Ascending aorta (tissue), 2 donors: ENCODE measurements at regions of chr2 and their contacts with region 1.

Region 1: DNA sequence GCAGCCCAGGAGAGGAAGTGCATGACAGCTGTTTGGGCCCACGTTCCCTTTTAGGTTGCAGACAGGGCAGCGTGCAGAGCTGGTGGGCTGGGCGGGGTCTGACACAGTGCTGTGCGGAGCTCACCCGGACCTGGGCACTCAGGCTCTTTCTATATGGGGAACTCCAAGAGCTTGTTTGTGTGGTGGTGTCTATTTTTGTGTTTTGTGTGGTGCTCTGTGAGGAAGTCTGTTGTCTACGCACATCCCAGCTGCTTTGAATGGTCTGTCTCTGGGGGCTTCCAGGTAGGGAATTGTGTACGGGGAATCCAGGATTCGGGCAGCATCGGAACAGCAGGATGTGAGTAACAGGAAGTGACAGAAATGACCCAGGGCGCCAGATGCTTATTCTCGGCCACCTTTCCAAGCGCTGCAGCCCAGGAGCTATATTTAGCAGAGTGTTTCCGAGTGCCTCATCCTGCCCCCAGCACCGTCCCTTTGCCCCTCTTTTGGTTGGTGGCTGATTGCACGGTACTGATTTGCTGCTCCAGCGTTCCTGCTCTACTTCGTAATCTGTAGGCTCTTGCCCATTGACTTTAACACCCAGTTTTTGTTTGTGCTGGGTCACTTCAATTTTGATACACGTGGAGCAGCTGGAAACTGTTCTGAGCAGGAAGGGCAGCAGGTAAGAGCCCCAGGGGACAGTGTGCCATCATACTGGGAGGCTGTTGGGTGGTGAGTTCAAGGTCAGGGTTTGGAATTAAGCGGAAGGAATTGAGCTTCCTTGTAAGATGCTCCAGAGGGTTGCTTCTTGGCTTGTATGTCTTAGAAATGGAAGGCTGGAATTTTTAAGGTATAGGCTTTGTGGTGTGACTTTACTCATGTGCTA is 64.7 kb downstream of the DGKD start:
- DNase-seq: peak; percentile 45 to 95
- H3K4me3 ChIP-seq: peak overlapping the region; percentile 50 to 63
- H3K27ac ChIP-seq: peak overlapping the region; percentile 76 to 95
- H3K4me1 ChIP-seq: peaks cover 17 to 25% of the 10 kb centered on the region in 2 donors
- H3K27me3 ChIP-seq: no peaks in the 10 kb centered on the region
- CTCF ChIP-seq: no peak

Region 2: DNA sequence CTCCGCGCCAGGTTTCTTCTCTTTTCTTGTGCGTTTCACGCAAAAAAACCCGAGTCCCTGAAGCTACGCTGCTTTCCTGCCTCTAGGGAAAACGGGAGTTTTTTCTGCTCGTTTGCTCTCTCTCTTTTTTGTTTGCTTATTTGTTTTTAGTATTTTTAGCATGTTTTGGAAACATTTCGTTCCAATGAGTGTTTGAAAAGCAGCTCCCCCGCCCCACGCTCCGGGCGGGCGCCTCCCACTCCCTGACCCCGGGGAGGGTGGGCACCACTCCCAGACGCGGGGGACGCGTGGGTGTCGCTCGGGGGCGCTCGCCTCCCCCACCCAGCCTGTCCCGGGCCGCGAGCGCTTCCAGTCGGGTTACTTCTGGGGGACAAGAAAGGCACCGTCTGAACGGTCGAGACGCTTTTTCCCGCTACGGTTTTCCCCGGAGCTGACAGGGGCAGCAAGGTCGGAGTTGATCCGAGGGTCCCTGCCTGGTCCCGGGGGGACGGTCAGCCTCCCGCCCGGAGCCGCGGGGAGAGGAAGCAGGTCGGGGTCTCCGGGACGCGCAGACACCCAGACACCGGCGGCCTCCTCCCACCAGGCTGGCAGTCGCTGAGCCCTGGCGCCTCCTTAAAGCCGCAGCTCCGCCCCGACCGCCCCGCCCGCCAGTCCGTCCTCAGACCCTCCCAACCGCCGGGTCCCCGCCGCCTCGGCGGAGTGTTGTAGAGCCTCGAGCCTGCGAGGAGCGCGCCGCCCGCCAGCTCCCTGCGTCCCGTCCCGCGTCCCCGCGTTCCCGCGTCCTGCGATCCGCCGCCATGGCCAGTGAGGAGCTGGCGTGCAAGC is 785.9 kb before region 1 on chr2 and contains the start of gene EFHD1:
- intact Hi-C with region 1: loop called (anchors 10 kb)
- DNase-seq: peak; percentile 39 to 93
- H3K4me3 ChIP-seq: peak within 1 kb of the TSS; percentile 78 to 92
- H3K27ac ChIP-seq: peak within 1 kb of the TSS; percentile 90 to 99
- H3K4me1 ChIP-seq: peaks cover 0 to 29% of the 10 kb centered on the region in 2 donors
- H3K27me3 ChIP-seq: no peaks in the 10 kb centered on the region
- CTCF ChIP-seq: no peak
- total RNA-seq, gene EFHD1: 142 TPM

Region 3: GRCh38 chr2:233353769-233354499 is 65.1 kb before region 1 on chr2 and contains the start of gene DGKD:
- intact Hi-C with region 1: loop called (anchors 2 kb)
- DNase-seq: peak in 1 of 2 donors; percentile 68
- H3K4me3 ChIP-seq: peak within 1 kb of the TSS; percentile 77 to 78
- H3K27ac ChIP-seq: peak within 1 kb of the TSS in 1 of 2 donors; percentile 46
- H3K4me1 ChIP-seq: peaks cover 0 to 10% of the 10 kb centered on the region in 2 donors
- H3K27me3 ChIP-seq: no peaks in the 10 kb centered on the region
- CTCF ChIP-seq: peak in 2 of 3 experiments; percentile 33 to 51
- total RNA-seq, gene DGKD: 28.3 TPM

Region 4: GRCh38 chr2:233375490-233376314 is 43.3 kb before region 1 on chr2:
- intact Hi-C with region 1: no loop called
- DNase-seq: peak in 1 of 2 donors; percentile 30
- H3K4me3 ChIP-seq: no peak overlapping the region
- H3K27ac ChIP-seq: no peak overlapping the region
- H3K4me1 ChIP-seq: peaks cover 0 to 4% of the 10 kb centered on the region in 2 donors
- H3K27me3 ChIP-seq: no peaks in the 10 kb centered on the region
- CTCF ChIP-seq: no peak

Region 5: DNA sequence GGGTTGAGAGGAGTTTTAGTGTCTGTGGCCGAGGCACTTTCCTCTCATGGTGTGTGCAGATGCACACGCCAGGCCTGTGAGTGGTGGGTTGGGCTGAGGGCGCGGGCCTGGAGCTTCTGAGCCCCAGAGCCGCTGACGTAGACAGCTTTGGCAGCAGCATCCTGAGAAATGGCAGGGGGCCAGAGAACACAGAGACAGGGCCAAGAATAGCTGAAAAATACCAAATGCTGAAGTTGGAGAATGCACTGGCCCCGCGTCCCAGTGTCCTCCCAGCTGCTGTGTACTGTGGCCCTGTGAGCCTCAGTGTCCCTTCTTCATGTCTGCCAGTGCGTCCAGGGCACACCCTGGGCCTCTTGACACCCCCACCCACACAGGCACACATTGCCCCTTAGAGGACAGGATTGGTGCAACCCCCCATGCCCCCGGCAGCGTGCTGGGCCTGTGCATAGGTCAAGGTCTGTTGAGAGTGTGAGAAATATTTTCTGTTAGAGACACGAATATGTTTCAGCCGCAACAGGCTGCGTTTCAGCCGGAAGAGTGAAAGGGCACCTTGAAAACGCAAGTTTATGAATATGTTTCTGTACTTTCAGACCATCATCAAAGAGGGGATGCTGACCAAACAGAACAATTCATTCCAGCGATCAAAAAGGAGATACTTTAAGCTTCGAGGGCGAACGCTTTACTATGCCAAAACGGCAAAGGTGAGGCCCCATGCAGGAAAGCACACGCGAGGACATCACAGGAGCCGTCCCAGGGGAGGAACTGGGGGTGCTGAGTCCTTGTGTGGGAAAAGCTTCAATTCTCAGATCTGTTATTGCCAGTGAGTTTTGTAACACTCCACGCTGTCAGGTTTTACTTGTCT is 31.1 kb before region 1 on chr2:
- intact Hi-C with region 1: loop called (anchors 5 kb)
- DNase-seq: peak; percentile 53 to 96
- H3K4me3 ChIP-seq: peak overlapping the region; percentile 18 to 54
- H3K27ac ChIP-seq: peak overlapping the region; percentile 78 to 84
- H3K4me1 ChIP-seq: peaks cover 11 to 25% of the 10 kb centered on the region in 2 donors
- H3K27me3 ChIP-seq: no peaks in the 10 kb centered on the region
- CTCF ChIP-seq: no peak

Region 6: GRCh38 chr2:233480490-233481202 is 61.7 kb after region 1 on chr2:
- intact Hi-C with region 1: loop called (anchors 10 kb)
- DNase-seq: peak in 1 of 2 donors; percentile 64
- H3K4me3 ChIP-seq: no peak overlapping the region
- H3K27ac ChIP-seq: peak overlapping the region in 1 of 2 donors; percentile 46
- H3K4me1 ChIP-seq: peaks cover 0 to 32% of the 10 kb centered on the region in 2 donors
- H3K27me3 ChIP-seq: no peaks in the 10 kb centered on the region
- CTCF ChIP-seq: no peak